ENCODE measurements at regions of chr5 and their contacts with region 1.

Region 1: GRCh38 chr5:42908509-42909488 is 97.1 kb upstream of the SELENOP start:
- DNase-seq: peak; percentile 96
- H3K4me3 ChIP-seq: peak overlapping the region; percentile 36 to 78 (median 48)
- H3K27ac ChIP-seq: peak overlapping the region in 4 of 8 donors; percentile 37 to 65 (median 60)
- H3K4me1 ChIP-seq: peaks cover 0 to 23% (median 12%) of the 10 kb centered on the region in 6 donors
- H3K27me3 ChIP-seq: peaks cover 0 to 11% (median 0%) of the 10 kb centered on the region in 7 donors
- CTCF ChIP-seq: peak; percentile 71 to 96 (median 86)
- POLR2A ChIP-seq: no peak

Region 2: GRCh38 chr5:42483472-42484154 is 425.2 kb before region 1 on chr5:
- intact Hi-C with region 1: no loop called
- DNase-seq: no peak
- H3K4me3 ChIP-seq: no peak overlapping the region
- H3K27ac ChIP-seq: no peak overlapping the region
- H3K4me1 ChIP-seq: no peaks in the 10 kb centered on the region
- H3K27me3 ChIP-seq: no peaks in the 10 kb centered on the region
- CTCF ChIP-seq: no peak
- POLR2A ChIP-seq: no peak

Region 3: DNA sequence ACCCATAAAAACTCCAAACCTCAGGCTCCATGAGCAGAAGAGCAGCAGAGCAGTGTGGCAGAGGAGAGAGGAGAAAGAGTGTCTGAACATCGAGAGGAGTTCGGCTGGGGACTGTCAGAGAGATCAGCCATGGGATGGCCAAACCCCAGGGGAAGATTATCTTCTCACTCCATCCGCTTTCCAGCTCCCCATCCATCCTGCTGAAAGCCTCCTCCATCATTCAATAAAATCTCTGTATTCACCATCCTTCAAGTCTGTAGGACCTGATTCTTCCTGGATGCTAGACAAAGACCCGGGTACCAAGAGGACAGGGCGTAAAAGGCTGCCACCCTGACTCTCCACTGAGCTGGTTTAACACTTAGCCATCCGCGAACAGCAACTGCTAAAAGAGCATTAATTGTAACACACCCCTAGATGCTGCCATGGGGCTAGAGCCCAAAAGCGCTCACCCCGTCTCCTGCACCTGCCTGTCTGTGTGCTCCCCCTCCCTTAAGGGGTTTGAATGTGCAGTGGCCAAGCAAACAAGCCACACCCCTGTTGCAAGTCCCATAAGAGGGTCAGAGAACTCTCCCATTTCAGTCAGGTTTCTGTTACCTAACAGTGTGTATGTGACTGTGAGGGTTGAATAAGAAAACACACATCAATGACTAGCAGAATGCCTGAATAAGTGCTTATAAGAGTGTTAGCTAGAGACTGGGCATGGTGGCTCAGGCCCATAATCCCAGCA is 83.2 kb before region 1 on chr5:
- intact Hi-C with region 1: no loop called
- DNase-seq: no peak
- H3K4me3 ChIP-seq: no peak overlapping the region
- H3K27ac ChIP-seq: no peak overlapping the region
- H3K4me1 ChIP-seq: peaks cover 0 to 4% (median 0%) of the 10 kb centered on the region in 6 donors
- H3K27me3 ChIP-seq: no peaks in the 10 kb centered on the region
- CTCF ChIP-seq: no peak
- POLR2A ChIP-seq: no peak

Region 4: DNA sequence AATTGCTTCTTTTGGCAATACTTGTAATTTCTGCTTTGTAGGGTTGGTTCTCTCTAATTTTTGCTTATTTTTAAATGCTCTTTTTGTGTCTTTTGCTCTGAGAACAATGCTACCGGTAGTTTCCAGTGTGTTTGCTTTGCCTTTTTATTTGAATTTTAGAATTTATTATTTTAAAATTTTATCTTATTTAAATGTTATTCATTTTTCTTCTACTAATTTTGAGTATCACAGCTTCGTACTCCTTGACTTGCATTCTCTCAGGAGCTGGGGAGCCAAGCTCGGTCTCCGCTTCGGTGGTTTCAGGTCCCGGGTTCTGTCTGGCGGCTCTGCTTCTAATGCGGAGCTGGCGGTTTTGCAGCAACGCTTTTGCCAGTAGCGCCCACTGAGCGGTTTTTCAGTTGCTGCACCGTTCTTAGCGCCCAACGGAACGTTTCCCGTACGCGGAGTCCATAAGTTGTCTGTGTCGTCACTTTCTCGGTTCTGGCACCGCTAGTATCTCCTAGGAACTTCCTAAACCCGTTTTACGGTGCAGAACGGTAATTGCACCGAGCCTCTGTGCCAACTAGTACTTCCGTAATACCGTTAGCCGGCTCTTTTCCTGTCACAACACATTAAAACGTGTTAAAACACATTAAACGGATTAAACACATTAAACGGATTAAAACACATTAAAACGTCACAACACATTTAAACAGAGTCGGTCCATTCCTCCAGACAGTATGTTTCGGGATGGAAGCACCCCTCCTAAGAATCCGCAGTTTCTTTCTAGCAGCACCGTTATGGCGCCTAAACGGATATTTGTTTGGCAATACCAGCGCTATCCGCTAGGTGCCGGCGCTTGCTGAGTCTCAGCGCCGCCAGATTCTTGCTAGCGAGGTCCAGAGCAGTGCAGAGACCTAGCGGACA is 85.7 kb after region 1 on chr5:
- intact Hi-C with region 1: loop called (anchors 10 kb)
- DNase-seq: peak; percentile 96
- H3K4me3 ChIP-seq: peak overlapping the region; percentile 45 to 71 (median 62)
- H3K27ac ChIP-seq: peak overlapping the region; percentile 97 to 100 (median 100)
- H3K4me1 ChIP-seq: peaks cover 4 to 52% (median 30%) of the 10 kb centered on the region in 6 donors
- H3K27me3 ChIP-seq: peaks cover 0 to 6% (median 0%) of the 10 kb centered on the region in 7 donors
- CTCF ChIP-seq: peak; percentile 68 to 97 (median 92)
- POLR2A ChIP-seq: peak in 2 of 3 donors; percentile 24 to 58

Region 5: DNA sequence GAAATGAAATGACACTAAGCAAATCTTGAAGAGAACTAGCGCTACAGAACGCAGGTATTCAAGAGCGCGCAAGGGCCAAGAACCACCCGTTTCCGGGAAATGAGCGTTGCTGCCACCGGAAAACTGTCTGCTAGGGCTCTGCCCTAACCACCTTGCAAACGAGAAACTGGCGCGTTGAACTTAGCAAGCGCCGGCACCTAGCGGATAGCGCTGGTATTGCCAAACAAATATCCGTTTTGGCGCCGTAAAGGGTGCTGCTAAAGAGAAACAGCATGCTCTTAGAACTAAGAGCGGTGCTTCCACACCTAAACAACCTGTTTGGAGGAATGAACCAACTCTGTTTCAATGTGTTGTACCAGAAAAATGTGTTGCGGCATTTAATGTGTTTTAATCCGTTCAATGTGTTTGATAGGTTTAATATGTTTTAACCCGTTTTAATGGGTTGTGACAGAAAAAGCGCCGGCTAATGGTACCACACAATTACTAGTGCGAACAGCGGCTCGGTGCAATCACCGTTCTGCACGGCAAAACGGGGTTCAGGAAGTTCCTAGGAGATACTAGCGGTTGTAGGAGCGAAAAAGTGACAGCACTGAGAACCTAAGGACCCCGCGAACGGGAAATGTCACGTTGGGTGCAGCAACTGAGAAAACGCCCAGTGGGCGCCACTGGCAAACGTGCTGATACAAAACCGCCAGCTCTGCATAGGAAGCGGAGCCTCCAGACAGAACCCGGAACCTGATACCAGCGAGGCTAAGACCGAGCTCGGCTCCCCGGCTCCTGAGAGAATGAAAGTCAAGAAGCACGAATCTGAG is 131.7 kb after region 1 on chr5 and contains the start of gene ANXA2R:
- intact Hi-C with region 1: loop called (anchors 10 kb)
- DNase-seq: peak; percentile 97
- H3K4me3 ChIP-seq: peak within 1 kb of the TSS; percentile 42 to 85 (median 54)
- H3K27ac ChIP-seq: peak within 1 kb of the TSS; percentile 96 to 99 (median 98)
- H3K4me1 ChIP-seq: peaks cover 0 to 75% (median 52%) of the 10 kb centered on the region in 6 donors
- H3K27me3 ChIP-seq: no peaks in the 10 kb centered on the region
- CTCF ChIP-seq: peak; percentile 60 to 98 (median 93)
- POLR2A ChIP-seq: peak in 1 of 3 donors; percentile 56
- total RNA-seq, gene ANXA2R: 10.0 to 27.2 (median 16.4) TPM

Region 6: GRCh38 chr5:43105369-43106289 is 196.8 kb after region 1 on chr5:
- intact Hi-C with region 1: loop called (anchors 10 kb)
- DNase-seq: peak; percentile 96
- H3K4me3 ChIP-seq: peak overlapping the region; percentile 16 to 75 (median 38)
- H3K27ac ChIP-seq: peak overlapping the region; percentile 57 to 88 (median 75)
- H3K4me1 ChIP-seq: peaks cover 0 to 23% (median 10%) of the 10 kb centered on the region in 6 donors
- H3K27me3 ChIP-seq: no peaks in the 10 kb centered on the region
- CTCF ChIP-seq: peak; percentile 98 to 100 (median 99)
- POLR2A ChIP-seq: no peak

Region 7: DNA sequence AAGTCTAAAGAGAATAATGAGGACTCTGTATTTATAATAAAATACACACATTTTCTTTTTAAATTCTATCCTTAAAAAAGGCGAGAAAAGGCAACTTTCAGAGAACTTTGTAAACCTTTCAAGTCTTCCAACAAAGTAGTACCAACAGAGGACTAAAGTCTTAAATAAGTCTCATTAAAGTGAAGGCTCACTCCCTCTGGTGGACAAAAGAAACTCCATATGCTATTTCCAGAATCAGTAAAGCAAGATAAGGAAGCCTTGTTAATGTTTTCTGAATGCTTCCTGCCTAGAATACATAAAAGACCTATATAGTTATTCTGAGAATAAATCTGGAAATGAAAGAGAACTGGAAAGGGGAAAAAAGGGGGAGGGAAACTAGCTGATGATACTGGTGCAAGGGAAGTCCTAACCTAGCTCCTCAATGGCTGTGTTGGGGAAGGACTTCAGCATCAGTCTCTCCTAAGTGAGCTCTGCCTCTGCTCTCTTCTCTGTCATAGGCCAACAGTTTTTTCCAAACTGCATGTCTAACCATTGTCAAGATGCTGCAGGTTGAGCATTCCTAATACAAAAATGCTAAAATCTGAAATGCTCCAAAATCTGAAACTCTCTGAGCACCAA is 397.3 kb after region 1 on chr5:
- intact Hi-C with region 1: loop called (anchors 10 kb)
- DNase-seq: no peak
- H3K4me3 ChIP-seq: no peak overlapping the region
- H3K27ac ChIP-seq: peak overlapping the region in 1 of 8 donors; percentile 22
- H3K4me1 ChIP-seq: peaks cover 0 to 91% (median 31%) of the 10 kb centered on the region in 6 donors
- H3K27me3 ChIP-seq: no peaks in the 10 kb centered on the region
- CTCF ChIP-seq: peak in 10 of 11 experiments; percentile 27 to 72 (median 54)
- POLR2A ChIP-seq: no peak

Measured in spleen (tissue), 13 donors.